Activated CD4-positive, alpha-beta T cell treated with anti-CD3 and anti-CD28 coated beads, Interleukin-2, amount 10 ng/mL, durations not matched to agents 7 days and 5 days (primary cell): ENCODE measurements at regions of chr1 and their contacts with region 1.

Region 1: DNA sequence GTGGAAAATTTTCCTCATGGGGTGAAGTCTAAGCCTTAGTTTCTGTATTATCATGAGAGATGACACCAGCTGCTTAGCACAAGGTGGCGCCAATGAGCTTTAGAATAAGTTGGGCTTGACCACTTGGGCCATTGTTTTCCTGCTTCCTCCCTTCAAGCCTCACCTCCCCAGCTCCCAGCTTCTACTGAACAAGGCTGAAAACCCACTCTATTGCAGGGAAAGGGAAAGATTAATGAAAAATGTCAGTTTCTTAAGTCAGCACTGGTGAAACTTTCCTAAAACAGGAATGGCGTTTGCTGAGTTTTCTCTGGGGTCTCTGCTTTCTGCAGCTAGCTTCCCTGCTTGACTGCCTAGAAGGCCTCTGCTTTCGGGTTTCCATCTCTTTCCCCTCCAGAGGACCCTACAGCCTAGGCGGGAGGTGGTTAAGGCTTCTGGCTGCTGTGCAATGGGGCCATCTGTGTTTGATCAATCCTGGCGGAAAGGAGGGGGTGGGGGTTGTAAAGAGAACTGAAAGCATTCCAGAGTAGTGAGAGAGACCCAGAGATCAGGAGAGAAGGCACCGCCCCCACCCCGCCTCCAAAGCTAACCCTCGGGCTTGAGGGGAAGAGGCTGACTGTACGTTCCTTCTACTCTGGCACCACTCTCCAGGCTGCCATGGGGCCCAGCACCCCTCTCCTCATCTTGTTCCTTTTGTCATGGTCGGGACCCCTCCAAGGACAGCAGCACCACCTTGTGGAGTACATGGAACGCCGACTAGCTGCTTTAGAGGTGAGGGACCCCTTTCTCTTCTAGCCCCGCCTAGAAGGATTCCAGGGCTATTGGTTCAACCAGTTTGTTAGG is at the start of gene OLFML3:
- DNase-seq: peak; percentile 61
- H3K4me3 Mint-ChIP-seq: no peak within 1 kb of the TSS
- H3K27ac Mint-ChIP-seq: peak within 1 kb of the TSS; percentile 12
- H3K4me1 Mint-ChIP-seq: peaks cover 44% of the 10 kb centered on the region
- H3K27me3 Mint-ChIP-seq: no peaks in the 10 kb centered on the region
- total RNA-seq, gene OLFML3: 0.71 to 0.94 TPM

Region 2: DNA sequence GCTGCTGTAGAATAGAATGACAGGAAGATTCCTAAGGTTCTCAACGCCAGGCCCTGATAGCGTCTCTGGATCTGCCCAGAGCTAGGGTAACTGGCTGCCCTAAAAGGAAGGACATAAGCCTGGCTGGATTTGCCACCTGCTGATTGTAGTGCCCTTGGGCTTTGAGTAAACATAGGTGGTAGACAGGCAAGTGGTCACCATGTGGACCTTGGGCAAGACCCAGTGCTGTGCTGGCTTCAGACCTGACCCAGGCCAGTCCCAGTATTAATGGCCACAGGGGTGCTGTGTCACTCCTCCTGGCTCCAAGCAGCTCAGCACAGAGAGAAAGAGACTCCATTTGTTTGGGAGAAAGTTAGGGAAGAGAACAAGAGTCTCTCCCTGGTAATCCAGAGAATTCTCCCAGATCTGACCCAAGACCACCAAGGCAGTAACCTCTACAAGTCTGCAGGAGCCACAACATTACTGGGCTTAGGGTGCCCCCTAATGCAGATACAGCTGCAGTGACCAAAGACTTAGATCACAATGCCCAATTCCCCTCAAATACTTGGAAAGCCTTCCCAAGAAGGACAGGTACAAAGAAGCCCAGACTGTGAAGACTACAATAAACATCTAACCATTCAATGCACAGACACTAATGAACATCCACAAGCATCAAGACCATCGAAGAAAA is 264.3 kb before region 1 on chr1:
- CTCF ChIA-PET with region 1: no interaction called
- POLR2A ChIA-PET with region 1: no interaction called
- DNase-seq: no peak
- H3K4me3 Mint-ChIP-seq: no peak overlapping the region
- H3K27ac Mint-ChIP-seq: no peak overlapping the region
- H3K4me1 Mint-ChIP-seq: no peaks in the 10 kb centered on the region
- H3K27me3 Mint-ChIP-seq: no peaks in the 10 kb centered on the region

Region 3: DNA sequence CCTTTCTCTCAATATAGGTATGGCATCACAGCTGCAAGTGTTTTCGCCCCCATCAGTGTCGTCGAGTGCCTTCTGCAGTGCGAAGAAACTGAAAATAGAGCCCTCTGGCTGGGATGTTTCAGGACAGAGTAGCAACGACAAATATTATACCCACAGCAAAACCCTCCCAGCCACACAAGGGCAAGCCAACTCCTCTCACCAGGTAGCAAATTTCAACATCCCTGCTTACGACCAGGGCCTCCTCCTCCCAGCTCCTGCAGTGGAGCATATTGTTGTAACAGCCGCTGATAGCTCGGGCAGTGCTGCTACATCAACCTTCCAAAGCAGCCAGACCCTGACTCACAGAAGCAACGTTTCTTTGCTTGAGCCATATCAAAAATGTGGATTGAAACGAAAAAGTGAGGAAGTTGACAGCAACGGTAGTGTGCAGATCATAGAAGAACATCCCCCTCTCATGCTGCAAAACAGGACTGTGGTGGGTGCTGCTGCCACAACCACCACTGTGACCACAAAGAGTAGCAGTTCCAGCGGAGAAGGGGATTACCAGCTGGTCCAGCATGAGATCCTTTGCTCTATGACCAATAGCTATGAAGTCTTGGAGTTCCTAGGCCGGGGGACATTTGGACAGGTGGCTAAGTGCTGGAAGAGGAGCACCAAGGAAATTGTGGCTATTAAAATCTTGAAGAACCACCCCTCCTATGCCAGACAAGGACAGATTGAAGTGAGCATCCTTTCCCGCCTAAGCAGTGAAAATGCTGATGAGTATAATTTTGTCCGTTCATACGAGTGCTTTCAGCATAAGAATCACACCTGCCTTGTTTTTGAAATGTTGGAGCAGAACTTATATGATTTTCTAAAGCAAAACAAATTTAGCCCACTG is 38.5 kb before region 1 on chr1:
- CTCF ChIA-PET with region 1: interaction called, 4 read pairs
- POLR2A ChIA-PET with region 1: interaction called, 15 read pairs
- DNase-seq: peak; percentile 51
- H3K4me3 Mint-ChIP-seq: peak overlapping the region; percentile 62
- H3K27ac Mint-ChIP-seq: peak overlapping the region; percentile 87
- H3K4me1 Mint-ChIP-seq: peaks cover 77% of the 10 kb centered on the region
- H3K27me3 Mint-ChIP-seq: no peaks in the 10 kb centered on the region

Region 4: DNA sequence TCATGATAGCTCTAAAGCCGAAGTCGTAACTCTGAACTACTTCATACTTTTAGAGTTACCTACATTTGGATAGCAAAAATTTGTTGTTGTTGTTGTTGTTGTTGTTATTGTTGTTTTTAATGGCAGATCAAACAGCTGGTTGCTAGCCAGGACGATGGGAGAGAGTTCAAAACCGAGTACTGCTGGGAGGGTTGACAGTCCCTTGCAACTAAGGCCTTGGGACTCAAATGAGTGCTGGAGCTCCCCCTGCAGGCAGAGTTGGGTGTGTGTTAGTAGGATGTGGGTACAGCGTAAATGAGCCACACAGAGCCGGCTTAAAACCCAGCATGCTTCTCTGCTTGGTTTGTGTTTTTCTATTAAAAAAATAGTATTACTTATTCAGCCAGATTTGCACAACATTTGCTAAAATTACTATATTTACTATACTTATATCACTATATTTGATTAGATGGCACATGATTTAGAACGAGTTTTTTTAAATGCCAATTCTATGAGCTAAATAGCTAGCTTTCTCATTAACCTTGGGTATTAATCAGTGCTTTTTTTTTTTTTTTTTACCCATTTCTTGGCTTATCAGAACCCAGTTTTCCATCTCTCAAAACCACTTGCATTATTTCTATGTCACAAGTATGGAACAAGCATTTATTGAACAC is 303.8 kb after region 1 on chr1:
- CTCF ChIA-PET with region 1: interaction called, 18 read pairs
- POLR2A ChIA-PET with region 1: no interaction called
- DNase-seq: peak; percentile 91
- H3K4me3 Mint-ChIP-seq: no peak overlapping the region
- H3K27ac Mint-ChIP-seq: no peak overlapping the region
- H3K4me1 Mint-ChIP-seq: no peaks in the 10 kb centered on the region
- H3K27me3 Mint-ChIP-seq: peaks cover 3% of the 10 kb centered on the region